ENCODE measurements at regions of chr5 and their contacts with region 1.

Region 1: GRCh38 chr5:37029436-37029835 is 152.9 kb downstream of the NIPBL start:
- DNase-seq: no peak
- ATAC-seq: no peak
- H3K4me3 ChIP-seq: no peak overlapping the region
- H3K4me3 Mint-ChIP-seq: no peak overlapping the region
- H3K27ac ChIP-seq: no peak overlapping the region
- H3K27ac Mint-ChIP-seq: no peak overlapping the region
- H3K4me1 ChIP-seq: no peaks in the 10 kb centered on the region
- H3K4me1 Mint-ChIP-seq: peaks cover 13% of the 10 kb centered on the region
- H3K27me3 ChIP-seq: no peaks in the 10 kb centered on the region
- H3K27me3 Mint-ChIP-seq: no peaks in the 10 kb centered on the region
- CTCF ChIP-seq: no peak

Region 2: DNA sequence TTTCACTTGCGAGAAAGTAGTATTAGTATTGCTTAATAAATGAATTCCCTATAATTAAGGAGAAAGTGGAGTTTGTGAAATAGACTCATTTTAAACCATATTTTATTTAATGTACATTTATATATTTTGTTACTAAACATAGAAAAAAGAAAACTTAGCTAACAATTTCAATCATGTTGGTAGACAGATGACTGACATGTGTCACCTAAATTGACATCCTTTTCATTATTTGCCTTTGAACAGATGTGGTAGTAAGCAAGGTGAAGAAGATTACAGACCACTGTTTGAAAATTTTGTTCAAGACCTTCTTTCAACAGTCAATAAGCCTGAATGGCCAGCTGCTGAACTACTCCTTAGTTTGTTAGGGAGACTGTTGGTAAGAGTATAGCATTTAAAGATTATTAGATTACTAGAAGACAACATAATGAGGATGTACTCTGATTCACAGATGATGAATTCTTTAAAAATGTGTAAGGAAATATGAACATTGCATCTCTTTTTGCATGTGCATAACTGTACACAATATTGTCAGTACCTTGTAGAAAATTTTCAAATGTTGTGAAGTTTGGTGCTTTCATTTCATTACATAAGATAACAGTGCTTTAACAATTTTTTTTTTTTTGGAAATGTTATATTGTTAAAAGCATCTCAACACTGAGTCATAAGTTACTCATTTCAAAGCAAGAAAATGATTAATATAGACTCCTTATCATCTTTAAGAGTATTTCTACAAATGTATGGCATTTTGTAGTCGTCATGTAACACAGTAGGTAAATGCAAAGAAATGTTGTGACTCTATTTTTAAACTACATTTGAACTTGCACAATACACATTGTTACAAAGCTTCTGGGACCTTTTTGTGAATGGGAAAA is 13.4 kb before region 1 on chr5:
- CTCF ChIA-PET with region 1: no interaction called
- POLR2A ChIA-PET with region 1: no interaction called
- intact Hi-C with region 1: no loop called
- DNase-seq: no peak
- ATAC-seq: no peak
- H3K4me3 ChIP-seq: no peak overlapping the region
- H3K4me3 Mint-ChIP-seq: no peak overlapping the region
- H3K27ac ChIP-seq: no peak overlapping the region
- H3K27ac Mint-ChIP-seq: no peak overlapping the region
- H3K4me1 ChIP-seq: no peaks in the 10 kb centered on the region
- H3K4me1 Mint-ChIP-seq: no peaks in the 10 kb centered on the region
- H3K27me3 ChIP-seq: no peaks in the 10 kb centered on the region
- H3K27me3 Mint-ChIP-seq: no peaks in the 10 kb centered on the region
- CTCF ChIP-seq: no peak

Region 3: GRCh38 chr5:37323607-37324006 is 294.2 kb after region 1 on chr5:
- CTCF ChIA-PET with region 1: no interaction called
- POLR2A ChIA-PET with region 1: no interaction called
- intact Hi-C with region 1: loop called in 1 of 2 experiments (anchors 10 kb)
- DNase-seq: no peak
- ATAC-seq: no peak
- H3K4me3 ChIP-seq: no peak overlapping the region
- H3K4me3 Mint-ChIP-seq: no peak overlapping the region
- H3K27ac ChIP-seq: no peak overlapping the region
- H3K27ac Mint-ChIP-seq: no peak overlapping the region
- H3K4me1 ChIP-seq: no peaks in the 10 kb centered on the region
- H3K4me1 Mint-ChIP-seq: no peaks in the 10 kb centered on the region
- H3K27me3 ChIP-seq: no peaks in the 10 kb centered on the region
- H3K27me3 Mint-ChIP-seq: no peaks in the 10 kb centered on the region
- CTCF ChIP-seq: no peak